Common myeloid progenitor, CD34-positive (primary cell): ENCODE measurements at regions of chr13 and their contacts with region 1.

Region 1: DNA sequence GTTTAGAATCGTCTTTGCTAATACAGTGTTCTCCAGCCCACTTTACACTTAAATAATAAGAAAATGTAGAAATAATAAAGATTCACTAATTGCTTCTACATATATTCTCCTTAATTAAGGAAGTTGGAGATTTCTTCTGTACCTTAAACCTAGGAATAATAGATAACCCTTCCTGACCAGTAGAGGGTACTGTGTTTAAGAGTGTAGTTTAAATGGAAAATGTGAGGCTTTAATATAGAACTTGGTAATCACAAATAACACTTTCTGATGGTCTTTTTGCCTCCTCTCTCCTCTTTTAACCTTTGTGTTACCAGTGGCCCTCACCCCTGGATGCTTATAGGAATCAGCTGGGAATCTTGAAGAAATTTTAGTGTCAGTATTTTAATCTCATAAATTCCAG is 20.7 kb downstream of the POMP start:
- DNase-seq: peak; percentile 22 to 44 (median 38)
- H3K4me3 ChIP-seq: no peak overlapping the region
- H3K27ac ChIP-seq: no peak overlapping the region
- H3K4me1 ChIP-seq: no peaks in the 10 kb centered on the region
- H3K27me3 ChIP-seq: no peaks in the 10 kb centered on the region

Region 2: DNA sequence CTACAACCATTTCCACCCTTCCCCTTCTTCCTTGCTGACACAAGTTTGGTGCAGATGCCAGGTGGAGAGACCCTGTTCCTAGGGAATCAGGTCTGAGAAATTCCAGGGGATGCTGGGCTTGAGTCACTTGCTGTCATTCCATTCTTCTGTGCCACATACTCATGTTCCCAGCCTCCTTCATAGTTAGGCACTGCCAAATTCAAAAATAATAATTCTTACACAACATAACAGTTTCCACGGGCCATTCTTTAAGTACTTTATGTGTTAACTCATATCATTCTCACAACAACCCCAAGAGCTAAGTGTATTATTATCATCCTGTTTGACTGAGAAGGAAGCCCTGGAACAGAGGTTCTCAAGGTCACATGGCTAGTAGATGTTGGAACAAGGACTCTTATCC is 47.8 kb before region 1 on chr13:
- CTCF ChIA-PET with region 1: no interaction called
- POLR2A ChIA-PET with region 1: no interaction called
- DNase-seq: no peak
- H3K4me3 ChIP-seq: no peak overlapping the region
- H3K27ac ChIP-seq: no peak overlapping the region
- H3K4me1 ChIP-seq: peaks cover 0 to 9% (median 2%) of the 10 kb centered on the region in 4 experiments
- H3K27me3 ChIP-seq: no peaks in the 10 kb centered on the region

Region 3: GRCh38 chr13:28794396-28794795 is 114.8 kb after region 1 on chr13:
- CTCF ChIA-PET with region 1: interaction called, 12 read pairs
- POLR2A ChIA-PET with region 1: no interaction called
- DNase-seq: no peak
- H3K4me3 ChIP-seq: no peak overlapping the region
- H3K27ac ChIP-seq: no peak overlapping the region
- H3K4me1 ChIP-seq: peaks cover 0 to 5% (median 2%) of the 10 kb centered on the region in 4 experiments
- H3K27me3 ChIP-seq: peaks cover 0 to 5% (median 2%) of the 10 kb centered on the region in 5 experiments

Region 4: GRCh38 chr13:28843639-28844038 is 164.0 kb after region 1 on chr13:
- CTCF ChIA-PET with region 1: no interaction called
- POLR2A ChIA-PET with region 1: no interaction called
- DNase-seq: no peak
- H3K4me3 ChIP-seq: no peak overlapping the region
- H3K27ac ChIP-seq: no peak overlapping the region
- H3K4me1 ChIP-seq: no peaks in the 10 kb centered on the region
- H3K27me3 ChIP-seq: peaks cover 0 to 4% (median 0%) of the 10 kb centered on the region in 5 experiments